ENCODE measurements at regions of chr2 and their contacts with region 1.

Region 1: GRCh38 chr2:75608684-75609333 is 37.8 kb upstream of the MRPL19 start:
- DNase-seq: peak; percentile 77
- CTCF ChIP-seq: peak; percentile 97

Region 2: DNA sequence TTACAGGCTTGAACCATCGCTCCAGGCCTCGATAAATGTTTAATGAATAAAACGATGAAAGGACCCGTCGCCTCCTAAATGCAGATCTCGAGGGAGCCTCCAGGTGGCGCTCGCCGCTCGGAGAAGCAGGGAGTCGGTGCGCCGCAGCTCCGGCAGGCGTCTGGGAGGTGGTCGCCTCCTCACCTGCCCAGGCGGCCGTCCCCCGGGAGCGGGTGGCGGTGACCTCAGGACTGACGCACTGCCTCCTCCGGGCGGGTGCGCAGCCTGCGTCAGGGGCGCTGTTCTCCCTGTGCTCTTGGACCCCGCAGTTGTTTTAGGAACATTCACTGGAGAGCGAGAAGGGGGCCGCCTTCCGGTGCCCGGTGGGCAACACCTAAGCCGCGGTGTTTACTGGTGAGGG is 689.0 kb before region 1 on chr2:
- CTCF ChIA-PET with region 1: interaction called, 46 read pairs
- POLR2A ChIA-PET with region 1: no interaction called
- DNase-seq: peak; percentile 84
- CTCF ChIP-seq: peak; percentile 91

Region 3: GRCh38 chr2:75064691-75065396 is 544.0 kb before region 1 on chr2:
- CTCF ChIA-PET with region 1: interaction called, 28 read pairs
- POLR2A ChIA-PET with region 1: no interaction called
- DNase-seq: peak; percentile 62
- CTCF ChIP-seq: peak; percentile 76

Region 4: DNA sequence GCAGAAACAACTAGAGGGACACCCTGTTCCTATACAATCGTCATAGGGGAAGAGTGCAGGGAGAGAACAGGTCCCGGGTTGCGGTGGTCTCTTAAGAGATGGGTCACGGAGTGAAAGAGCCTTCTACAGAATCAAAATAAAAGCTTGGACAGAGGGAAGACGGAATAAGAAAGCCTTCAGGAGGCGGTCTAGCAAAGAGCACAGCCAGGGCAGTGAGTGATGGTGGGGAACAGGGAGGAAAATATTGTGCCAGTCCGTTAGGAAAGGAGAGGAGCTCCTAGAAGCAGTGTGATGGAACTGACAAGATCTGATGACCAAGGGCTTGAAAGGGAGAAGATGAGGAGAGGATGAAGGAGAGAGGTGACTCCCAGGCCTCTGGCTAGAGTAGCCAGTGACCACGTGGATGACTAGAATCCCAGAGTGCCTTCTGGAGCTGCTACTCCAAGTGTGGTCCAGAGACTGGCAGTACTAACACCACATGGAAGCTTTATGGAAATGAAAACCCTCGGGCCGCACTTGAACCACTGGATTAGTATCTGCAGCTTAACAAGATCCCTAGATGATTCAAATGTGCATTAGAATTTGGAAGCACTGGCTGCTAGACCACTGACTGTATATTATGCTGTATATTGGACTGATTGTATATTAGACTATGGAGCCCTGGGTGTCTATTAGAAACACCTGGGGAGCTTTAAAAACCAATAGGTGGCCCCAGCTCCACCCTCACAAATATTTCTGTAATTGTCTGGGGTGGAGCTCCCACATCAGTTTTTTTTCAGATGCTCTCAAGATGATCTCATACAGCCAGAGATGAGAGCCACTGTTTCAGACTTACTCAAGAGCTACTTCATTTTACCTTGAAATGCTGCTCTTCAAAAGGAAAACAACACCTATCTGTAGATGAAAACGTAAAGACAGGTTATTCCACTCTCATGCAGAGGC is 47.0 kb before region 1 on chr2:
- CTCF ChIA-PET with region 1: interaction called, 21 read pairs
- POLR2A ChIA-PET with region 1: no interaction called
- DNase-seq: no peak
- CTCF ChIP-seq: no peak

Region 5: GRCh38 chr2:75619956-75620740 is 11.3 kb after region 1 on chr2:
- CTCF ChIA-PET with region 1: interaction called, 25 read pairs
- POLR2A ChIA-PET with region 1: no interaction called
- DNase-seq: no peak
- CTCF ChIP-seq: no peak

Region 6: GRCh38 chr2:75640621-75641121 is 31.9 kb after region 1 on chr2:
- CTCF ChIA-PET with region 1: interaction called, 20 read pairs
- POLR2A ChIA-PET with region 1: no interaction called
- DNase-seq: peak; percentile 51
- CTCF ChIP-seq: peak; percentile 97

Measured in GM10248 (cell line).